ENCODE measurements at regions of chr7 and their contacts with region 1.

Region 1: GRCh38 chr7:27774717-27775328 is 34.9 kb downstream of the TAX1BP1 start:
- H3K4me3 Mint-ChIP-seq: no peak overlapping the region
- H3K27ac Mint-ChIP-seq: no peak overlapping the region
- H3K4me1 Mint-ChIP-seq: no peaks in the 10 kb centered on the region
- H3K27me3 Mint-ChIP-seq: no peaks in the 10 kb centered on the region

Region 2: DNA sequence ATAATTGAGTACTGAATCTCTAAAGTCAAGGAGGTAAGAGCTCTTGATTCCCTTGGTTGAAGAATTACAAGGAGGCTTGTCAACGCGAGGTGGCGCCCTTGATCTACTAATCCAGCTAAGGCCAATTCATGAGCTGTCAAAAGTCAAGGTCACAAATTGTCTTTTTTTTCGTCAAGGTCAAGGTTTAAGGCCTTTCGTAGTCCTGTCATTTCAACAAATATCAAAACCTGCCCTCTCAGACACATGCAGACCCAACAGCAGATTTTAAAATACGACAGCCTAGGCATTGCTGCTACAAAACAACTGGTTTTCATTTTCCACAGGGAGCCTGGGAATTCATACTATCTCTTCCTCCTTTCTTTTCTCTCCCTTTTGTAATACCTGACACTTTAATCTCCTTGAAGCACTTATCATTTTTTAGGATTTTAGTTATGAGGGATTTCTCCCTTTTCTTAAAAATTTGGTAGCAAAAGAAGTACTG is 578.5 kb before region 1 on chr7:
- intact Hi-C with region 1: loop called (anchors 5 kb)
- H3K4me3 Mint-ChIP-seq: no peak overlapping the region
- H3K27ac Mint-ChIP-seq: no peak overlapping the region
- H3K4me1 Mint-ChIP-seq: peaks cover 48% of the 10 kb centered on the region
- H3K27me3 Mint-ChIP-seq: peaks cover 81% of the 10 kb centered on the region

Region 3: DNA sequence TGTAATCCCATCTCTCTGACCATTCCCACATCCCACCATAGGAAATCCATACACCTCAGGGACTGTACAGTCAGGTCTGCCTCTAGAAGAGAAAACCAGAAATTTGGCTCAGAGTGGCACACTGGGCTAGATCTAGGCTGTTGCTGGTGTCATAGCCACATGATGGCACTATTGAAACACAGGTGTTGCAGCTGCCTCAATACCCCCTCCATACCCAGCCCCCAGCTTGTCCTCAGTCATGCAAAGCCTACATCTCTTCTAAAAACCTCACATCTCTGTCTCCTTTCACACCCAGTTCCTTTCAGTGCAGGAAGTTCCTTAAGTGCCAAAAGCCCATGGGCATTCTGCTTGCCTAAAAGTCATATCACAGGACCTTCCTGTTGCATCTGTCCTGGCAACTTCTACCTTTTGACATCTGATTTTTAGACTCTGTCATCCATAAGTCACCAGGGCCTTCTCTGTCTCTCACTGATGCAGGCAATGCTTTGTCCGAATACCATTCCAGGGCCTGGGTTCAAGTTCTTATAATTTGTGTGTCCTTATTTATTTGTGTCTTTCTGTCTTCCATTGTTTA is 85.1 kb before region 1 on chr7:
- intact Hi-C with region 1: loop called (anchors 5 kb)
- H3K4me3 Mint-ChIP-seq: no peak overlapping the region
- H3K27ac Mint-ChIP-seq: no peak overlapping the region
- H3K4me1 Mint-ChIP-seq: peaks cover 10% of the 10 kb centered on the region
- H3K27me3 Mint-ChIP-seq: peaks cover 6% of the 10 kb centered on the region

Region 4: DNA sequence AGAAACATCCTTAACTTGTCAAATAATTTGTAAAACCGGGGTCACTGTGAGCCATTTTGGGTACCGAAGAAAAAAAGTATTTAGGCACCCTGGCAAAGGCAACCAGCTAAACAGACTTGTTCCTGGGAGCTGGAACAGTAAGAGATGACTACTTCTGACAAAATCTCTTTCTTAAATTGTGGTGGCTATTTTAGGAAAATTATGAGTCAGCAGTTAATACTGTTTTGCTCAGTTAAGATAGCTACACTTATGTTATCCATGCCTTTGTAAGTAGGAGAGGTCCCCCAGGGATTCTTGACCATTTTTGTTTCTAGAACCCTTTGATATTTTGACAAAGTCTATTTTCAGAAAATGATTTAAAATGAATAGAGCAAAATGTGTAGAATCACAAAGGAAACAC is 33.8 kb after region 1 on chr7:
- intact Hi-C with region 1: no loop called
- H3K4me3 Mint-ChIP-seq: no peak overlapping the region
- H3K27ac Mint-ChIP-seq: no peak overlapping the region
- H3K4me1 Mint-ChIP-seq: peaks cover 6% of the 10 kb centered on the region
- H3K27me3 Mint-ChIP-seq: no peaks in the 10 kb centered on the region